AG04449 (cell line): ENCODE measurements at regions of chr10 and their contacts with region 1.

Region 1: GRCh38 chr10:96789571-96790108 is 42.5 kb upstream of the LCOR start:
- DNase-seq: no peak
- H3K4me3 ChIP-seq: no peak overlapping the region
- CTCF ChIP-seq: peak; percentile 77

Region 2: DNA sequence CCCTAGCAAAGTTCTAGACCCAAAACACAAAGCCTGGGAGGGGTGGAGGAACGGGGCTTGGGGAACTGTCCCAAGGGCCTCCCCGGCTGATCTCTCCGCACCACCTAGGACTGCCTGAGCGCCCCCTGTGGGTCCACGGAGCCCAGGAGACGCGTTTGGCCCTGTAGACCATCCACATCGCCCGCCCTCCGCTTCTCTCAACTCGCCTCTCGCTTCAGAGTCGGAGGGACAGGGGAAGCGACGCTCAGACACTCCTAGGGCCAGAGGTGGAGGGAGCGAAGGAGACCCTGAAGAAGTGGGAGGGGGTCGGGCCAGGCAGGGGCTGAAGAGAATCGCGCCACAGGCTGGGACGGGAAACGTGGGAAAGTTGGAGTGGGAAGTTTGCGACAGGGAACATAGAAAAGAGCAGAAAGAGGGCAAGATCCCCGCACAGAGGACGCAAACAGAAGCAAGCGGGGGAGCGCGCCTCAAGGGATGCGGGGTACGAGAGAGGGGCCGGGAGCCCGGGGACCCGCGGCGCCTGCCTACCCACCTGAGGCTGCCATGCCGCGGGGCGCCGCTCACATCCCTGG is 69.7 kb before region 1 on chr10:
- CTCF ChIA-PET with region 1: no interaction called
- POLR2A ChIA-PET with region 1: no interaction called
- DNase-seq: no peak
- H3K4me3 ChIP-seq: peak overlapping the region; percentile 8
- CTCF ChIP-seq: peak; percentile 15

Region 3: GRCh38 chr10:96765406-96766240 is 24.0 kb before region 1 on chr10:
- CTCF ChIA-PET with region 1: interaction called, 13 read pairs
- POLR2A ChIA-PET with region 1: no interaction called
- DNase-seq: no peak
- H3K4me3 ChIP-seq: no peak overlapping the region
- CTCF ChIP-seq: peak; percentile 81

Region 4: GRCh38 chr10:96770644-96771386 is 18.8 kb before region 1 on chr10:
- CTCF ChIA-PET with region 1: interaction called, 13 read pairs
- POLR2A ChIA-PET with region 1: no interaction called
- DNase-seq: no peak
- H3K4me3 ChIP-seq: no peak overlapping the region
- CTCF ChIP-seq: no peak

Region 5: GRCh38 chr10:96830511-96831199 is 41.0 kb after region 1 on chr10:
- CTCF ChIA-PET with region 1: interaction called, 31 read pairs
- POLR2A ChIA-PET with region 1: no interaction called
- DNase-seq: no peak
- H3K4me3 ChIP-seq: no peak overlapping the region
- CTCF ChIP-seq: peak; percentile 71